Esophagus muscularis mucosa (tissue), 4 donors: ENCODE measurements at regions of chr3 and their contacts with region 1.

Region 1: GRCh38 chr3:160399125-160400029 is at the starts of genes IFT80 and SMC4:
- DNase-seq: peak; percentile 98
- H3K4me3 ChIP-seq: peak within 1 kb of the TSS; percentile 72 to 87 (median 78)
- H3K27ac ChIP-seq: peak within 1 kb of the TSS; percentile 85 to 90 (median 88)
- H3K4me1 ChIP-seq: peaks cover 27 to 32% (median 30%) of the 10 kb centered on the region in 4 donors
- H3K27me3 ChIP-seq: peaks cover 0 to 16% (median 3%) of the 10 kb centered on the region in 4 donors
- CTCF ChIP-seq: no peak
- EP300 ChIP-seq: no peak
- POLR2A ChIP-seq: no peak
- total RNA-seq, gene IFT80: 5.5 to 11.9 (median 9.7) TPM
- total RNA-seq, gene SMC4: 14.7 to 19.8 (median 17.9) TPM

Region 2: GRCh38 chr3:160565442-160566403 is 166.3 kb after region 1 on chr3 and contains the start of gene KPNA4:
- intact Hi-C with region 1: loop called (anchors 10 kb)
- DNase-seq: peak; percentile 99
- H3K4me3 ChIP-seq: peak within 1 kb of the TSS; percentile 85 to 96 (median 90)
- H3K27ac ChIP-seq: peak within 1 kb of the TSS; percentile 98 to 99 (median 99)
- H3K4me1 ChIP-seq: peaks cover 41 to 54% (median 48%) of the 10 kb centered on the region in 4 donors
- H3K27me3 ChIP-seq: no peaks in the 10 kb centered on the region
- CTCF ChIP-seq: no peak
- EP300 ChIP-seq: no peak
- POLR2A ChIP-seq: peak; percentile 62
- total RNA-seq, gene KPNA4: 48.2 to 60.6 (median 55.3) TPM

Region 3: DNA sequence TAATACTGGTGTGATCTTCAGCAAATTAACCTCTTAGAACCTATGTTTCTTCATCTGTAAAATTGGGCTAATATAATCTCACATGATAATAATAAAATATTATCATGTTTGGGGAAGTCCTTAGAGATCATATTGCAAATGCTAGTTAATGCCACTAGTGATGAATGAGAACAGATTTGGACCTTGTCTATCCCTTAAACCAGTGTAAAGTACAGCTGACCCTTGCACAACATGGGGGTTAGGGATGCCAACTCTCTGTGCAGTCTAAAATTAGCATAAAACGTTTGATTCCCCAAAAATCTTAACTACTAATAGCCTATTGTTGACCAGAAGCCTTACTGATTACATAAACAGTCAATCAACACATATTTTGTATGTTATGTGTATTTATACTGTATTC is 564.6 kb after region 1 on chr3:
- intact Hi-C with region 1: no loop called
- DNase-seq: no peak
- H3K4me3 ChIP-seq: no peak overlapping the region
- H3K27ac ChIP-seq: no peak overlapping the region
- H3K4me1 ChIP-seq: no peaks in the 10 kb centered on the region
- H3K27me3 ChIP-seq: no peaks in the 10 kb centered on the region
- CTCF ChIP-seq: no peak
- EP300 ChIP-seq: no peak
- POLR2A ChIP-seq: no peak

Region 4: GRCh38 chr3:161220850-161221753 is 821.7 kb after region 1 on chr3 and contains the start of gene NMD3:
- intact Hi-C with region 1: loop called (anchors 10 kb)
- DNase-seq: peak; percentile 97
- H3K4me3 ChIP-seq: peak within 1 kb of the TSS; percentile 75 to 97 (median 94)
- H3K27ac ChIP-seq: peak within 1 kb of the TSS; percentile 92 to 97 (median 94)
- H3K4me1 ChIP-seq: peaks cover 21 to 45% (median 38%) of the 10 kb centered on the region in 4 donors
- H3K27me3 ChIP-seq: no peaks in the 10 kb centered on the region
- CTCF ChIP-seq: no peak
- EP300 ChIP-seq: peak; percentile 29
- POLR2A ChIP-seq: peak; percentile 45
- total RNA-seq, gene NMD3: 32.3 to 45.8 (median 40.6) TPM